ENCODE measurements at regions of chr22 and their contacts with region 1.

Region 1: GRCh38 chr22:22818861-22819855 is 68.5 kb upstream of the IGLL5 start:
- DNase-seq: peak; percentile 77
- H3K4me3 Mint-ChIP-seq: peak overlapping the region; percentile 70
- H3K27ac Mint-ChIP-seq: peak overlapping the region; percentile 98
- H3K4me1 Mint-ChIP-seq: peaks cover 96% of the 10 kb centered on the region
- H3K27me3 Mint-ChIP-seq: no peaks in the 10 kb centered on the region

Region 2: GRCh38 chr22:22546490-22546889 is 272.7 kb before region 1 on chr22:
- CTCF ChIA-PET with region 1: no interaction called
- POLR2A ChIA-PET with region 1: no interaction called
- DNase-seq: no peak
- H3K4me3 Mint-ChIP-seq: no peak overlapping the region
- H3K27ac Mint-ChIP-seq: no peak overlapping the region
- H3K4me1 Mint-ChIP-seq: no peaks in the 10 kb centered on the region
- H3K27me3 Mint-ChIP-seq: peaks cover 3% of the 10 kb centered on the region

Region 3: DNA sequence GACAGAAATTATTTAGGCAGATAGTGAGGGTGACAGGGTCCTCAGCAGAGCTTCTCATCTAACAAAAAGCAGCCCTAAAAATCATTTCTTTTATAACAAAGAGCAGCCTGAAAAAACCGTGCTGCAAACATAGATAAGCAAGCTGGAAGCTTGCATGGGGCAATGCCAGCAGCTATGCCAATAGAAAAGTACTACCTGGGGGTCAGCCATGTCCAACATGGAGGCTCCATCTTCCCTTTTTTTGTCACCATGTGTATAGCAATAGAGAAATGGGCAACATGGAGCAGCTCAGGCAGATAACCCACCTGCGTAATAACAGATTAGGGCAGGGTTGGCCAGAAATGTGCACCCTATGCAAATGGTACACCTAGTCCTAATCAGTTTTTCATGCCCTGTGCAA is 11.0 kb after region 1 on chr22:
- CTCF ChIA-PET with region 1: interaction called, 10 read pairs
- POLR2A ChIA-PET with region 1: no interaction called
- DNase-seq: no peak
- H3K4me3 Mint-ChIP-seq: no peak overlapping the region
- H3K27ac Mint-ChIP-seq: no peak overlapping the region
- H3K4me1 Mint-ChIP-seq: peaks cover 8% of the 10 kb centered on the region
- H3K27me3 Mint-ChIP-seq: peaks cover 47% of the 10 kb centered on the region

Measured in activated CD4-positive, alpha-beta T cell treated with anti-CD3 and anti-CD28 coated beads, Interleukin-2, amount 10 ng/mL, durations not matched to agents 7 days and 5 days (primary cell).